ENCODE measurements at regions of chr20 and their contacts with region 1.

Region 1: DNA sequence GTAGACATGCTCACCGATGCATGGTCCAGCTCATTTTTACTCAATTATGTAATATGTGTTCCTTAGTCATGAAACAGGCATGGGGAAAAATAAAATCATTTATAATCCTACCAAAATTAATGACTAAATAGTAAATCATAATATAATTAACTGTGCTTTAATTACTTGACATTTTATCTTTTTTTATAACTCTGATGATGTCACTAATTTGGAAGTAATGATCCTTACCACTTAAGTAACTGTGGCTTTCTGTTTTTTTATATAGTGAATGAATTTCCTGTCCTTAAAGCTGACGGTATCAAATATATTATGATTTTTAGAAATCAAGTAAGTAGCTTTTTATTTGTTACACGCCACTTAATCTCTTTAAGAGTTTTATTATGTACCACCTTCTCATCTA is 32.2 kb downstream of the CSE1L start:
- H3K4me3 Mint-ChIP-seq: no peak overlapping the region
- H3K27ac Mint-ChIP-seq: no peak overlapping the region
- H3K4me1 Mint-ChIP-seq: no peaks in the 10 kb centered on the region
- H3K27me3 Mint-ChIP-seq: no peaks in the 10 kb centered on the region

Region 2: GRCh38 chr20:48025031-48025515 is 1053.2 kb before region 1 on chr20:
- intact Hi-C with region 1: no loop called
- H3K4me3 Mint-ChIP-seq: no peak overlapping the region
- H3K27ac Mint-ChIP-seq: no peak overlapping the region
- H3K4me1 Mint-ChIP-seq: no peaks in the 10 kb centered on the region
- H3K27me3 Mint-ChIP-seq: peaks cover 32% of the 10 kb centered on the region

Region 3: DNA sequence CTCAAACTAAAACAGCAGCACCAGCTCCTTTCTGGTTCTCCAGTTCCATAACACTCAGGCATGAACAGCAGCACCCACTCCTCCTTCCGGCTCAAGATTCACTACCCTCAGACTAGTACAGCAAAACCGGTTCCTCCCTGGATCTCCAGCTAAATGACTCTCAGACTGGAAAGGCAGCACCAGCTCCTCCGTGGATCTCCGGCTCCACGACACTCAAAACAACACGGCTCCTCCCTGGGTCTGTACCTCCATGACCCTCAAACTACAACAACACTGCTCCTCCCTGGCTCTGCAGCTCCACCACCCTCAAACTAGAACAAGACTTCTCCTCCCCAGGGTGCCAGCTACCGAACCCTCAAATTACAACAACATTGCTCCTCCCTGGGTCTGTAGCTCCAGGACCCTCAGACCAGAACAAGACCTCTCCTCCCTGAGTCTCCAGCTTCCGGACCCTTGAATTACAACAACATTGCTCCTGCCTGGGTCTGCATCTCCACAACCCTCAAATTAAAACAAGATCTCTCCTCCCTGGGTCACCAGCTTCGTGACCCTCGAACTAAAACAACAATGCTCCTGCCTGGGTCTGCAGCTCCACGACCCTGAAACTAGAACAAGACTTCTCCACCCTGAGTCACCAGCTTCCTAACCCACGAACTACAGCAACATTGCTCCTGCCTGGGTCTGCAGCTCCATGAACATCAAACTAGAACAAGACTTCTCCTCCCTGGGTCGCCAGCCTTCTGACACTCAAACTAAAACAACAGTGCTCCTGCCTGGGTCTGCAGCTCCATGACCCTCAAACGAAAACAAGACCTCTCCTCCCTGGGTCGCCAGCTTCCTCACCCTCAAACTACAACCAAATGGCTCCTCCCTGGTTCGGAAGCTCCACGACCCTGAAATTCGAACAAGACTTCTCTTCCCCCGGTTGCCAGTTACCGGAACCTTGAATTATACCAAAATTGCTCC is 575.2 kb before region 1 on chr20:
- intact Hi-C with region 1: no loop called
- H3K4me3 Mint-ChIP-seq: no peak overlapping the region
- H3K27ac Mint-ChIP-seq: no peak overlapping the region
- H3K4me1 Mint-ChIP-seq: no peaks in the 10 kb centered on the region
- H3K27me3 Mint-ChIP-seq: peaks cover 5% of the 10 kb centered on the region

Region 4: GRCh38 chr20:48945851-48946514 is 132.3 kb before region 1 on chr20:
- intact Hi-C with region 1: no loop called
- H3K4me3 Mint-ChIP-seq: no peak overlapping the region
- H3K27ac Mint-ChIP-seq: no peak overlapping the region
- H3K4me1 Mint-ChIP-seq: peaks cover 4% of the 10 kb centered on the region
- H3K27me3 Mint-ChIP-seq: no peaks in the 10 kb centered on the region

Region 5: DNA sequence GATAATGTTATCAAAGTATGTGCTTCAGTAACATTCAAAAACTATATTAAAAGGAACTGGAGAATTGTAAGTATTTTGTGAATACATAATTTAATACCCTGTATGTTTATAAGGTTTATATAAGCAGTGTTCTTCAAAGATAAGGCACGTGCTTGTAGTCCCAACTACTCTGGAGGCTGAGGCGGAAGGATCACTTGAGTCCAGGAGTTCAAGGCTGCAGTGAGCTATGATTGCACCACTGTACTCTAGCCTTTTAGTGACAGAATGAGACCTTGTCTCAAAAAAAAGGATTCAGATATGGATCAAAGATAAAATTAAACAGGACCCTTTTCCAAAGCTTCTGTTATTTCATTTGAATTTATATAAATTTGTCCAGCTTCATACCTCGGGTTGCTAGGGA is 15.0 kb before region 1 on chr20:
- intact Hi-C with region 1: no loop called
- H3K4me3 Mint-ChIP-seq: no peak overlapping the region
- H3K27ac Mint-ChIP-seq: no peak overlapping the region
- H3K4me1 Mint-ChIP-seq: no peaks in the 10 kb centered on the region
- H3K27me3 Mint-ChIP-seq: no peaks in the 10 kb centered on the region

Region 6: DNA sequence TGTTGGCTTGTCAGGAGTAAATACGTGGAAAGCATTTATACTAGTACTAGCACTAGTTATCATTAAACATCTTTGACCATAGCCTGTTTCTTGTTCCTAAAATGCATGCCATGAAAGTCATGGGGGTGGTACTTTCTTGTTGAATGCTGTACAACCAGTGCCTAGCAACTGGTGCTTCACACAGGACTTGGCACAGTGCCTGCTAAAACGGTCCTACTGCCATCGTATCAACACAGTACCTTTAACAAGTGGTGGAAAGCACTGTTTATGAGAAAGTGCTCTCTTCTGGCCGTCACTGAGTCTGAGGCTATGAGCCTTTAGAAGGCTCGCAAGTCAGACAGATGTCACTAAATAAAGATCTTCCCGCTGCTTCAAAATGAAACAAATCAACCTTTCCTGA is 178.0 kb after region 1 on chr20:
- intact Hi-C with region 1: loop called (anchors 10 kb)
- H3K4me3 Mint-ChIP-seq: no peak overlapping the region
- H3K27ac Mint-ChIP-seq: no peak overlapping the region
- H3K4me1 Mint-ChIP-seq: no peaks in the 10 kb centered on the region
- H3K27me3 Mint-ChIP-seq: no peaks in the 10 kb centered on the region

Measured in dendritic cell treated with granulocyte-macrophage colony-stimulating factor and Interleukin-4, amounts not matched to agents 40 ng/mL and 50 ng/mL, for 4 days (primary cell).